ENCODE measurements at regions of chr1 and their contacts with region 1.

Region 1: DNA sequence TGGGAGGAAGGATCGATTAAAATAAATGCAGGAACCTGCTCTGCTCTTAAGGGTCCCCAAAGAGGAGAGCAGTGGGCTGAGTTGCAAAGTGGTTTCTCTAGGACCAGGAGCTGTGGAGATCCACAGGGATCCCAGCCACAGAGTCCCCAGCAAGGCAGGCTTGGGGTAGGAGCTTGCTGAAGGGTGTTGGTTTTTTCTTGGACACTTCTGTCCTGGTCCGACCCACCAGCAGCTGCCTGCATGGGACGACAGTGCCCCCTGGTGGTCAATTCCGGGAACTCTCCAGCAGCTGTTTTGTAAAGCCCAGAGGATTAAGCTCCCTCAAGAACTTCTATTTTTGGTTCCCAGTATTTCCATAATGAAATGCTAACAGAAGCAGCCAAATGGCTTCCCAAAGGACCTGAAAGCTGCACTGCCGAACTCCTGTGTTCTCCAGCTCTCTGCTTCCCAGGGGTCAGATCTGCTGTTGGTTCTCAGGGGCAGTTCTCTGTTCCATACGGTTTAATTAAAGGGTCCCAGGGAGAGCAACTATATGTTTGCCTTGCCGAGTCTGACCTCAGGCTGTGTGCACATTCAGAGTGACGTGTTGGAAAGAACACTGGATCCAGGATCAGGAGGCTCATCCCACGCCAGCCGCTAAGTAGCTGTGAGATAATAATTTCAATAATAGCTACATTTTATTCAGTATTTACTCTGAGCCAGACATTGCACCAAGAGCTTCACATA is 23.2 kb downstream of the NENF start:
- DNase-seq: no peak
- ATAC-seq: peak; percentile 91
- H3K4me3 ChIP-seq: no peak overlapping the region
- H3K27ac ChIP-seq: no peak overlapping the region
- H3K4me1 ChIP-seq: no peaks in the 10 kb centered on the region
- H3K27me3 ChIP-seq: no peaks in the 10 kb centered on the region; a peak in 1 of 4 replicates
- CTCF ChIP-seq: peak; percentile 95 to 99 (median 96)
- EP300 ChIP-seq: no peak
- POLR2A ChIP-seq: no peak
- RAD21 ChIP-seq: peak; percentile 100

Region 2: GRCh38 chr1:212035123-212035834 is 420.7 kb before region 1 on chr1 and contains the starts of genes DTL and INTS7:
- CTCF ChIA-PET with region 1: interaction called, 42 read pairs
- POLR2A ChIA-PET with region 1: interaction called, 4 read pairs
- RAD21 ChIA-PET with region 1: interaction called, 27 read pairs
- SMC1A ChIA-PET with region 1: interaction called, 34 read pairs
- in situ Hi-C with region 1: no loop called
- intact Hi-C with region 1: no loop called
- DNase-seq: peak; percentile 96
- ATAC-seq: peak; percentile 77
- H3K4me3 ChIP-seq: peak within 1 kb of the TSS; percentile 90
- H3K27ac ChIP-seq: peak within 1 kb of the TSS; percentile 98
- H3K4me1 ChIP-seq: peaks cover 17% of the 10 kb centered on the region
- H3K27me3 ChIP-seq: no peaks in the 10 kb centered on the region
- CTCF ChIP-seq: peak; percentile 82 to 97 (median 83)
- EP300 ChIP-seq: no peak
- POLR2A ChIP-seq: peak; percentile 89
- RAD21 ChIP-seq: no peak
- polyA plus RNA-seq, gene DTL: 24.1 to 24.6 TPM
- polyA plus RNA-seq, gene INTS7: 17.1 to 20.1 TPM

Region 3: DNA sequence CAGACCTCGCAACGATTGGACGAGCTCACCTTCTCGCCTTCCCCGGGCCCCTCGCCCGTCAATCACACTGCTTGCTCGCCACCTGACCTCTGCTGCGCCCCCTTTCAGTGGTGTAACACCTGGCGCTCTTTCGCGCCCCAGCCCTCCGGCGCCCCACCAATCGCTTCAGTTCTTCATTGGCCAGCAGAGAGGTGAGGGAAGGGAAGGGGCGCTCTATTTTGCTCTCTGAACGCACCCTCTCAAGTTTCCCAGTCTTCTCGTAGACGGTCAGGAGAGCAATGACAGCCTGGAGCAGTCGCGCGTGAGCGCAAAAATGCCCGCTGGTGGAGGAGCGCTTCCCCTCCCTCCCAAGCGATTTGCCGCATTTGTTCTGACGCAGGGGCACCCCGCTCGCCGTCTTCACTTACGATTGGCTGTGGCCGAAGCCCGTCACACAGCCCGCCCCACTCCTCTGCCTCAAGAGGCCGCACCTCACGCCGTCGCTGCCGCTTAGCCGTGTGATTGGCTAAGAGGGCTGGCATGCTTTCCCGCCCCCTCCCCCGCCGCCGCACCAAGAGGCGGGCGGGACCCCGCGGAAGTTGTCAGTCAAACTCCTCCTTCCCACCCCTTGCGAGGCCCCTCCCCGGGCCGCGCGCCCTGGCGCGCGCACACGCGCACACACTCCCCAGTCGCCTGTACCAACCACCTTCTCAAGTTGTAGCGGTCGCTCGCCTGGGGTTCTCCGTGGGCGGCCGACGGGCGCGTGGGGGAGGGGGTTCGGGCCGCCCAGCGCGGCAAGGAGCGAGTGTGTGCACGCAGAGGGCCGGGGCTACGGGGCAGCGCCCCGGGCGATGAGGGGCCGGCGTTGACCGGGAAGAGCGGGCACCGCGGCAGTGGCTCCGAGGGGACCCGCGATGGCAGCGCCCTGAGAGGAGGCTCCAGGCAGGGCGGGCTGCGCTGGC is 171.0 kb before region 1 on chr1 and contains the start of gene PPP2R5A:
- CTCF ChIA-PET with region 1: interaction called, 52 read pairs
- POLR2A ChIA-PET with region 1: interaction called, 4 read pairs
- RAD21 ChIA-PET with region 1: interaction called, 50 read pairs
- SMC1A ChIA-PET with region 1: interaction called, 28 read pairs
- in situ Hi-C with region 1: no loop called
- intact Hi-C with region 1: loop called (anchors 5 kb)
- DNase-seq: peak; percentile 97
- ATAC-seq: peak; percentile 94
- H3K4me3 ChIP-seq: peak within 1 kb of the TSS; percentile 88
- H3K27ac ChIP-seq: peak within 1 kb of the TSS; percentile 79
- H3K4me1 ChIP-seq: peaks cover 7% of the 10 kb centered on the region
- H3K27me3 ChIP-seq: no peaks in the 10 kb centered on the region
- CTCF ChIP-seq: peak; percentile 9 to 40 (median 27); a peak in 5 of 6 replicates
- EP300 ChIP-seq: no peak
- POLR2A ChIP-seq: peak; percentile 77
- RAD21 ChIP-seq: no peak
- polyA plus RNA-seq, gene PPP2R5A: 15.4 to 18.2 TPM

Region 4: DNA sequence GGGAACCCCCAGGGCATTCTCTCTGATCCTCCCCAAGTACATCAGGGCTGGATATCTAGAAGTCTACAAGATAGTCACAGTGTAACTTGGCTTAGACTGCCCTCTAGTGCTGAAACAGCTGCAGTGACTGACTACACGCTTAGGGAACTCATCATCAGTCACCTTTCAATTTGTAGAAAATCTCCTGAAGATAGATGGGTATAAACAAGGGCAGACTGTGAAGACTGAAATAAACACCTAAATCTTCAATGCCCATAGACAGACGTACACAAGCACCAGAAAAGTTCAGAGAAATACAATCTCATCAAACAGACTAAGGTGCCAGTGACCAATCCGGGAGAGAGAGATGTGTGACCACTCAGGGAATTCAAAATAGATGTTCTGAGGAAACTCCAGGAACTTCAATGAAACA is 87.9 kb before region 1 on chr1:
- CTCF ChIA-PET with region 1: interaction called, 123 read pairs
- POLR2A ChIA-PET with region 1: no interaction called
- RAD21 ChIA-PET with region 1: interaction called, 36 read pairs
- SMC1A ChIA-PET with region 1: interaction called, 102 read pairs
- in situ Hi-C with region 1: no loop called
- intact Hi-C with region 1: loop called (anchors 1 kb)
- DNase-seq: peak; percentile 36
- ATAC-seq: peak; percentile 99
- H3K4me3 ChIP-seq: no peak overlapping the region
- H3K27ac ChIP-seq: no peak overlapping the region
- H3K4me1 ChIP-seq: no peaks in the 10 kb centered on the region
- H3K27me3 ChIP-seq: no peaks in the 10 kb centered on the region
- CTCF ChIP-seq: peak; percentile 77 to 90 (median 87)
- EP300 ChIP-seq: no peak
- POLR2A ChIP-seq: no peak
- RAD21 ChIP-seq: peak; percentile 90

Region 5: DNA sequence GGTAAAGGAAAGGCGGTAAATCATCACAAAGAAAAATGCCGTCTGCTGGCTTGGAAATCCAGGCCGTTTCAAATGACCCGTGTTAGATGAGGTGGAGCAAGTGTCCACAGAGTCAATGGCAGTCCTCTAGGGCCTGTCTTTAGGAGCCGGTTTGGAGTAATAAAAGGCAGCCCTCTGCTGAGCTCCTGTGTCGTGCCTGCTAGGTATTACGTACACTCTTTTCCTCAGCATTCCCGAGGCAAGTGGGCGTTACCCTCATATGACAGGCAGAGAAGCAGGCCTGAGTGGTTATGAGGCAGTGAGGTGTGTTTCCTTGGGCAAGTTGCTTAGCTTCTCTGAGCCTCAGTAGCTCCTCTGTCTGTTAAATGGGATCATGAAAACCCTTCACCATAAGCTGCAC is 15.5 kb before region 1 on chr1:
- CTCF ChIA-PET with region 1: interaction called, 24 read pairs
- POLR2A ChIA-PET with region 1: no interaction called
- RAD21 ChIA-PET with region 1: interaction called, 5 read pairs
- SMC1A ChIA-PET with region 1: interaction called, 10 read pairs
- in situ Hi-C with region 1: no loop called
- intact Hi-C with region 1: no loop called
- DNase-seq: no peak
- ATAC-seq: no peak
- H3K4me3 ChIP-seq: no peak overlapping the region
- H3K27ac ChIP-seq: no peak overlapping the region
- H3K4me1 ChIP-seq: peaks cover 4% of the 10 kb centered on the region; the same call in 1 of the 2 replicates
- H3K27me3 ChIP-seq: no peaks in the 10 kb centered on the region
- CTCF ChIP-seq: no peak
- EP300 ChIP-seq: no peak
- POLR2A ChIP-seq: no peak
- RAD21 ChIP-seq: no peak

Region 6: GRCh38 chr1:212665241-212666115 is 209.5 kb after region 1 on chr1:
- CTCF ChIA-PET with region 1: interaction called, 25 read pairs
- POLR2A ChIA-PET with region 1: no interaction called
- RAD21 ChIA-PET with region 1: interaction called, 10 read pairs
- SMC1A ChIA-PET with region 1: interaction called, 10 read pairs
- in situ Hi-C with region 1: no loop called
- intact Hi-C with region 1: no loop called
- DNase-seq: no peak
- ATAC-seq: peak; percentile 98
- H3K4me3 ChIP-seq: peak overlapping the region; percentile 64
- H3K27ac ChIP-seq: peak overlapping the region; percentile 33; the same call in 1 of the 2 replicates
- H3K4me1 ChIP-seq: peaks cover 24% of the 10 kb centered on the region
- H3K27me3 ChIP-seq: no peaks in the 10 kb centered on the region
- CTCF ChIP-seq: peak; percentile 90 to 98 (median 94)
- EP300 ChIP-seq: no peak
- POLR2A ChIP-seq: no peak
- RAD21 ChIP-seq: peak; percentile 94